ENCODE measurements at regions of chr20 and their contacts with region 1.

Region 1: GRCh38 chr20:59141787-59142581 is 21.6 kb upstream of the ZNF831 start:
- DNase-seq: no peak
- H3K4me3 ChIP-seq: no peak overlapping the region
- H3K27ac ChIP-seq: no peak overlapping the region
- H3K4me1 ChIP-seq: no peaks in the 10 kb centered on the region
- H3K27me3 ChIP-seq: no peaks in the 10 kb centered on the region
- CTCF ChIP-seq: no peak
- POLR2A ChIP-seq: no peak

Region 2: DNA sequence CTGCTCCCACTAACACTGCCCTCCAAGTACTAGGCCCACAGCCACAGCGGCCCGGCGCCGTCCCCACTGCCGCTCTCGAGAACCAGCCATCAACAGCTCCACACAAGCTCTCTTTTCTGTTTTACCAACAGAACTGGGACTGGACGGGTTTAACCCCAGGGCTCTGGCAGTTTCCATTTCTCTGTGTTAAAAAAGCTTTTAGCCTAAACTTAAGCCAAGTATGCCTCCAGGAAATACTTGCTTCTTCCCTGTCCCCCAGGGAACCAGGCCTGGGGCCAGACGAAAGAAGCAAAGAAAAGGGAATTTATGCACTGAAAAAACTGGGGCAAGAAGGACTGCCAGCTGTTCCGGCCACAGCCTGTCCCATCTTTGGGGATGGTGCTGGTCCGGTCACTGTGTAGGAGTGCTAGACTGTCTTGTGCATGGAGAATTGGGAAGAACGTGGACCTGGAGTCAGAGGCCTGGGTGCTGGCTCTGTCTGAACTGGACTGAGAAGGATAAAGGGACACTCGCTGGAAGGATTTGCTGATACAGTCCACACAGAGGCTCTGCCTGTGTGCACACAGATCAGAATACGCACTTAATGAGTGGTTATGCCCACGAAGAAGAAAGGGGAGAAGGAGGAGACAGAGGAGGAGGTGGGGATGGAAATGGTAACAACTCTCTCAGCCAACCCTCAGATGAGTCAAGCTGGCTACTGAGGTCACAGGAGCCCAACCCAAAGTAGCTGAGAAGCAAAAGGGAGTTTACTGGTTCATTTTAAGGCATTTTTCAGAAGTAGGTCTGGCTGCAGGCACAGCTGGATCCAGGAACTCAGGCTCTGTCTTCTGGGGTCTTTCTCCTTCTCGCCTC is 1177.7 kb before region 1 on chr20:
- intact Hi-C with region 1: loop called (anchors 5 kb)
- DNase-seq: no peak
- H3K4me3 ChIP-seq: no peak overlapping the region
- H3K27ac ChIP-seq: peak overlapping the region; percentile 55 to 61
- H3K4me1 ChIP-seq: peaks cover 0 to 6% of the 10 kb centered on the region in 2 donors
- H3K27me3 ChIP-seq: no peaks in the 10 kb centered on the region
- CTCF ChIP-seq: no peak
- POLR2A ChIP-seq: no peak

Region 3: DNA sequence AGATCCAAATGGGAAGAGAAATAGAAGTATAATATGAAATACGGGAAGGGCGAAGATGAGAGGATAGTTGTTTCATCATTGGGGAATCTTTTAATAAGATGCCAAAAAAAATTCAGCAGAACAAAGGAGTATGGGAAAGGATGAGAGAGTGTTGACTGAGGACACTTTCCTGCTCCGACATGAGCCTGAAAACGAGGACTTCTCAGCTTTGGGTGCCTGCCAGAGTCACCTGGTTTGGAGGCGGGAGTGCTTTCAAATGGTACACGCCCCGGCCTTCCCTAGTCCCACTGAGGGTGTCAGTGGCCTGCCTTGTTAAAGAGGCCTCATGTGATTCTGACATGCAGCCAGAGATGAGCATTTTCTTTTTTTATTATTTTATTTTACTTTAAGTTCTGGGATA is 1164.4 kb before region 1 on chr20:
- intact Hi-C with region 1: no loop called
- DNase-seq: peak in 1 of 2 donors; percentile 78
- H3K4me3 ChIP-seq: no peak overlapping the region
- H3K27ac ChIP-seq: peak overlapping the region; percentile 17 to 65
- H3K4me1 ChIP-seq: peaks cover 0 to 5% of the 10 kb centered on the region in 2 donors
- H3K27me3 ChIP-seq: no peaks in the 10 kb centered on the region
- CTCF ChIP-seq: no peak
- POLR2A ChIP-seq: no peak

Region 4: GRCh38 chr20:60142587-60142986 is 1000.6 kb after region 1 on chr20:
- intact Hi-C with region 1: no loop called
- DNase-seq: no peak
- H3K4me3 ChIP-seq: no peak overlapping the region
- H3K27ac ChIP-seq: no peak overlapping the region
- H3K4me1 ChIP-seq: no peaks in the 10 kb centered on the region
- H3K27me3 ChIP-seq: no peaks in the 10 kb centered on the region
- CTCF ChIP-seq: no peak
- POLR2A ChIP-seq: no peak

Measured in breast epithelium (tissue), 4 donors.